ENCODE measurements at regions of chr2 and their contacts with region 1.

Region 1: DNA sequence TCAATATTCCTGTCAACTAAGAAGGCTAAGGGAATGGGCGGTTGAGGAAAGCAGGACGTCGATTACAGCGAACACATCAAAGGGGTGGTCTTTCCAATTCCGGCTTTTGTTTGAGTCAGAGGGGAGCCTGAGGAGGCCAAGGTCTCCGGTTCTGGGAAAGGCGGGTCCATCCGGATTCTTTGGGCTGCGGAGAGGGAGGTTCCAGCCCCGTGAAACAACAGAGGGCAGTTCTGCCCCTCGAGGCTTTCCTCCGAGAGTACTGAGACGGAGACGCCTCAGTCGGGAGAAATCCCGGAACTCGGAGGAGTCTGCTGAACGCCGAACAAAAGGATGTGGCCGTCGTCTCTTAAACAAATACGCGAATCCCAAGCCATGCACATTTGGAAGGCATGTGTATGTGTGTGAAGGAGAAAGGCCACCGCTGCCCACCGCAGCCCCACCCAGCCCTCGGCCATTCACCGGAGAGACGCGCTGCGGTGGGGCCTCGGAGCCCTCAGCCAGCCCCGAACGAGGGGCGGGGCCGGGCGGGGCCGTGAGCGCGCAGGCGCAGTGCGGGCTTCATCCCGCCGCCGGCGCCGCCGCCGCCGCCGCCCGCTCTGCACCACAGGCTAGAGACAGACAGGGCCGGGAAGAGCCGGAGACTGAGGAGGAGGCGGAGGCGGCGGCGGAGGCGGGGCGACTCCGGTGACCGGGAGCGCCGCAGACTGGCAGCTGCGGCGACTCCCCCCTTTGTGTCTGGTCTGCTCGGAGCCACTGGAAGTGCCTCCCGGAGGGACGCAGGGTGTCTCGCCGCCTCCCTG is at the start of gene BMPR2:
- DNase-seq: peak; percentile 89
- ATAC-seq: peak; percentile 92 to 93
- total RNA-seq, gene BMPR2: 46.7 to 65.8 TPM

Region 2: DNA sequence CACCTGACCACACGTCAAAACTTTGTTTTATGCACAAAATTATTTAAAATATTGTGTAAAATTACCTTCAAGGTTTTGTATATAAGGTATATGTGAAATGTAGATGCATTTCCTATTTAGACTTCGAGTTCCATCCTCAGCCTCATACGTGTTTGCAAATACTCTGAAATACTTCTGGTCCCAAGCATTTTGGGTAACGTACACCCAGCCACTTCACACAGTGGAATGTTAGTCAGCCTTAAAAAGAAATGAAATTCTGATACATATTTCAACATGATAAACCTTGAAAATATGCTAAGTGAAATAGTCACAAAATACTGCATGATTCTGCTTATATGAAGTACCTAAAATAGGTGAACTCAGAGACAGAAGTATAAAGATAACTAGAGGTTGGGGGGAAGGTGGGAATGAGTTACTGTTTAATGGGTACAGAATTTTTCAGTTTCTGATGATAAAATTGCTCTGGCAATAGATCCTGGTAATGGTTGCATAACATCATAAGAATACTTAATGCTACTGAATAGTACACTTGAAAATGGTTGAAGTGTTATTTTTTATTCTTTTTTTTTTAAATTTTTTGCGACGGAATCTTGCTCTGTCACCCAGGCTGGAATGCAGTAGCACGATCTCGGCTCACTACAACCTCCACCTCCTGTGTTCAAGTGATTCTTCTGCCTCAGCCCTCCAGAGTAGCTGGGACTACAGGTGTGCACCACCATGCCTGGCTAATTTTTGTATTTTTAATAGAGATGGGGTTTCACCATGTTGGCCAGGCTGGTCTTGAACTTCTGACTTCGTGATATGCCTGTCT is 86.2 kb before region 1 on chr2:
- intact Hi-C with region 1: loop called in 1 of 2 experiments (anchors 10 kb)
- DNase-seq: no peak
- ATAC-seq: no peak

Region 3: GRCh38 chr2:202494300-202495229 is 118.8 kb after region 1 on chr2:
- intact Hi-C with region 1: loop called in 1 of 2 experiments (anchors 10 kb)
- DNase-seq: no peak
- ATAC-seq: peak in 1 of 2 donors; percentile 51

Measured in left cardiac atrium (tissue), 4 donors.